AG04450 (cell line): ENCODE measurements at regions of chr1 and their contacts with region 1.

Region 1: DNA sequence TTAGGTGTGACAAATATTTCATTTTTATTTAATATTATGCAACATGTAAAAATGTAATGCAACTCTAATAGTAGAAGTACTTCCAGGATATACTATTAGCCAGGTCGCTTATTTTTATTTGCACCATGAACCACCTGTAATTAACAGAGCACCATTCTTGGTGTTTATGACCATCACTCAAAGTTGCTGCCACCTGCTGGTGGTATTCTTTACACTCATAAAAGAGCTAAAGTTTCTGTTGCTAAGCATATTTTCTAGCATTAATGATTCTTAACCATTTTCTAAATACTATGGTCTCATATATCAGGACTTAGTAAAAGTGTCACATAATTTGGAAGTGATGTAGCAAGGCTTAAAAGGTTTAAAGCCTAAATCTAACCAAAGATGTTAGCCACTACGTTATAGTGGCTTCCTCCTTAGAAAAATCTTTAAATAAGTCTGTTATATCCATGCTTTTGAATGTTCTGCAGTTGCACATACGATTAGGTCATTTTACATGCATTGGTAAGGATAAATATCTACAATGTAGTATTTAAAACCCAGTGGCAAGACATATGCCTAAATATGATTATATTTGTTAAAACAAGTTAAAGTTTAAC is 244.5 kb downstream of the NEGR1 start:
- DNase-seq: peak; percentile 3
- H3K4me3 ChIP-seq: no peak overlapping the region
- H3K27ac ChIP-seq: no peak overlapping the region
- H3K27me3 ChIP-seq: no peaks in the 10 kb centered on the region
- CTCF ChIP-seq: peak; percentile 69

Region 2: GRCh38 chr1:71494163-71494562 is 543.7 kb before region 1 on chr1:
- CTCF ChIA-PET with region 1: no interaction called
- POLR2A ChIA-PET with region 1: no interaction called
- DNase-seq: no peak
- H3K4me3 ChIP-seq: no peak overlapping the region
- H3K27ac ChIP-seq: no peak overlapping the region
- H3K27me3 ChIP-seq: no peaks in the 10 kb centered on the region
- CTCF ChIP-seq: no peak

Region 3: GRCh38 chr1:71587961-71588360 is 449.9 kb before region 1 on chr1:
- CTCF ChIA-PET with region 1: interaction called, 19 read pairs
- POLR2A ChIA-PET with region 1: no interaction called
- DNase-seq: peak; percentile 4
- H3K4me3 ChIP-seq: no peak overlapping the region
- H3K27ac ChIP-seq: no peak overlapping the region
- H3K27me3 ChIP-seq: no peaks in the 10 kb centered on the region
- CTCF ChIP-seq: peak; percentile 48

Region 4: DNA sequence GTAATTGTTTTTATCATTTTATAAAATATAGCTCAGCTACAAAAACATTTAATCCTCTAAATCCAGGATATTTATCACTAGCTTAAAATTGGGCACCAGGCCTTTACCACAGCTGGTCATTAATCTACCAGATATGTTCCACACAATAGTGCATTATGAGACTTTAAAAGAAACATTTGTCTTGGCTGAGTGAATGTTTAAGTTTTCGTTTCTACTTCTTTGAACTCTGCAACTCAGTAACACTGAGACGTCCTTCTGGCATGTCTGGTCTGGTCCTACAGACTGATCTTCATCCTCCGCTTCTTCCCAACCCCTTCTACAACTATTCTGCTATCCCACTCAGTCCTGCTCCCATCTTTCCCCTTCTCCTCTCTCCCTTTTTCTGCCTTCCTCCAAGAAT is 51.7 kb before region 1 on chr1:
- CTCF ChIA-PET with region 1: interaction called, 21 read pairs
- POLR2A ChIA-PET with region 1: no interaction called
- DNase-seq: no peak
- H3K4me3 ChIP-seq: no peak overlapping the region
- H3K27ac ChIP-seq: no peak overlapping the region
- H3K27me3 ChIP-seq: no peaks in the 10 kb centered on the region
- CTCF ChIP-seq: no peak

Region 5: GRCh38 chr1:72051538-72051937 is 13.7 kb after region 1 on chr1:
- CTCF ChIA-PET with region 1: interaction called, 18 read pairs
- POLR2A ChIA-PET with region 1: no interaction called
- DNase-seq: no peak
- H3K4me3 ChIP-seq: no peak overlapping the region
- H3K27ac ChIP-seq: no peak overlapping the region
- H3K27me3 ChIP-seq: no peaks in the 10 kb centered on the region
- CTCF ChIP-seq: no peak

Region 6: GRCh38 chr1:72357411-72357810 is 319.6 kb after region 1 on chr1:
- CTCF ChIA-PET with region 1: no interaction called
- POLR2A ChIA-PET with region 1: no interaction called
- DNase-seq: peak; percentile 2
- H3K4me3 ChIP-seq: no peak overlapping the region
- H3K27ac ChIP-seq: no peak overlapping the region
- H3K27me3 ChIP-seq: no peaks in the 10 kb centered on the region
- CTCF ChIP-seq: no peak